Mammary epithelial cell (primary cell): ENCODE measurements at regions of chr11 and their contacts with region 1.

Region 1: GRCh38 chr11:118592616-118593367 is 14.6 kb upstream of the PHLDB1 start:
- DNase-seq: no peak
- H3K4me3 ChIP-seq: no peak overlapping the region
- H3K27ac ChIP-seq: no peak overlapping the region
- H3K4me1 ChIP-seq: no peaks in the 10 kb centered on the region
- H3K27me3 ChIP-seq: no peaks in the 10 kb centered on the region
- CTCF ChIP-seq: no peak

Region 2: DNA sequence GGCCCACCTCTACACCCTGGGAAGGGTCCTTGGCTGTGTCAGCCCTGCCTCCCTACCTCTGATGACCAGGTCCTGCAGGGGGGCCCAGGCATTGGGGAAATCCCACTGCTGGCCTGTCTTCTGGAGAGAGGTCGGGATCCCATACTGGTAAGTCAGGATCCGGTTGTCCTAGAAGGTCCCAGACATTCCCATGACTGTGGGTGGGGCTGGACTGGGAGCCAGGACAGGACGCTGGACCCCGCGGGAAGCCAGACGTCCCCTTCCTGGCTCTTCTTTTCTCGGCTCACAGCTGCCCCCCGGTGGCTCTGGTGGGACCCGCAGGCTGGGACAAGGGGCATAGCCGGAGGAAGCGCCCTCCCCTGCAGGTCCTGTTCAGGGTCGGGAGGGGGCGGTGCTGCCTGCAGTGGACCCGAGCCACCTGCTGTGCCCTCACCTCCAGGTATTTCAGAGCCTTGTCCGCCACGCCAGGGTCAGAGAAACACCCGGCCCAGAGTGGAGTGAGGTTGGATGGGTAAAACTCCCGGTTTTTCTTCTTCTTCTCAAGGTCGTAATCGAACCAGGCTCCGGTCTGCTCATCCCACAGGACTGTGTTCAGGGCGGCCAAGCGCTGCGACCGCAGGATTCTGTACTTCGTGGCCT is 66.6 kb after region 1 on chr11:
- CTCF ChIA-PET with region 1: no interaction called
- dilution Hi-C with region 1: no loop called
- in situ Hi-C with region 1: no loop called
- intact Hi-C with region 1: loop called (anchors 1 kb)
- DNase-seq: peak; percentile 58
- H3K4me3 ChIP-seq: no peak overlapping the region
- H3K27ac ChIP-seq: no peak overlapping the region
- H3K4me1 ChIP-seq: peaks cover 23% of the 10 kb centered on the region
- H3K27me3 ChIP-seq: no peaks in the 10 kb centered on the region
- CTCF ChIP-seq: peak; percentile 81 to 85